ENCODE measurements at regions of chr11 and their contacts with region 1.

Region 1: DNA sequence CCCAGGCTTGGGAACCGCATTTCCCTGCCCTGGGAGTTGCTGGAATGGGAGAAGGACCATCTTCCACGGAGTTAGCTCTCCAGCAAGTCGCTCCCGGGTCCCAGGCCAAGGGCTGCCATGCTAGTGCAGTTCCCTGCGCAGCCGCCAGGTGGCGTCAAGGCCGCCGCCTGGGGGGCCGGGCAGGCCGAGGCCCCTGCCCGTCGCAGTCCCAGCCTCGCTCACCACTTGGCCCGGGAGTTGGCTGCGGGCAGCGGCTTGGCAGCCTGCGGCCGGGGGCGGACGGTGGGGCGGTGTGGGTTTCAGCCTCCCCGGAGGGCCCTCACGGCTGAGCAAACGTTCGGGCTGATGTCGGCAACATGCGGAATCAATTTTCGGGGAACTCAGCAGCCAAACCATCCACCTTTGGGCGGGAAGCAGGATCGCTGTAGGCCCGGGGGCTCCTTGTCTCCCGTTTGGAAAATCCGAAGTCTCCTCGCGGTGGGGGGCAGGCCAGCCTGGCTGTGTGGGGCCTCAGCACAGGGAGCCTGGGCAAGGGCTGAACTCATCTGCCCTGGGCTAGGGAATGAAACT is 415.1 kb downstream of the SOX6 start:
- DNase-seq: no peak
- H3K4me3 ChIP-seq: peak overlapping the region; percentile 8
- CTCF ChIP-seq: peak; percentile 95

Region 2: GRCh38 chr11:15835788-15836411 is 105.4 kb before region 1 on chr11:
- CTCF ChIA-PET with region 1: no interaction called
- POLR2A ChIA-PET with region 1: no interaction called
- DNase-seq: no peak
- H3K4me3 ChIP-seq: no peak overlapping the region
- CTCF ChIP-seq: no peak

Region 3: GRCh38 chr11:15923183-15923582 is 18.1 kb before region 1 on chr11:
- CTCF ChIA-PET with region 1: interaction called, 16 read pairs
- POLR2A ChIA-PET with region 1: no interaction called
- DNase-seq: no peak
- H3K4me3 ChIP-seq: no peak overlapping the region
- CTCF ChIP-seq: peak; percentile 25

Region 4: GRCh38 chr11:15929371-15929901 is 11.8 kb before region 1 on chr11:
- CTCF ChIA-PET with region 1: interaction called, 18 read pairs
- POLR2A ChIA-PET with region 1: no interaction called
- DNase-seq: no peak
- H3K4me3 ChIP-seq: no peak overlapping the region
- CTCF ChIP-seq: no peak

Region 5: GRCh38 chr11:15958910-15959309 is 17.6 kb after region 1 on chr11:
- CTCF ChIA-PET with region 1: interaction called, 11 read pairs
- POLR2A ChIA-PET with region 1: no interaction called
- DNase-seq: no peak
- H3K4me3 ChIP-seq: no peak overlapping the region
- CTCF ChIP-seq: no peak

Region 6: DNA sequence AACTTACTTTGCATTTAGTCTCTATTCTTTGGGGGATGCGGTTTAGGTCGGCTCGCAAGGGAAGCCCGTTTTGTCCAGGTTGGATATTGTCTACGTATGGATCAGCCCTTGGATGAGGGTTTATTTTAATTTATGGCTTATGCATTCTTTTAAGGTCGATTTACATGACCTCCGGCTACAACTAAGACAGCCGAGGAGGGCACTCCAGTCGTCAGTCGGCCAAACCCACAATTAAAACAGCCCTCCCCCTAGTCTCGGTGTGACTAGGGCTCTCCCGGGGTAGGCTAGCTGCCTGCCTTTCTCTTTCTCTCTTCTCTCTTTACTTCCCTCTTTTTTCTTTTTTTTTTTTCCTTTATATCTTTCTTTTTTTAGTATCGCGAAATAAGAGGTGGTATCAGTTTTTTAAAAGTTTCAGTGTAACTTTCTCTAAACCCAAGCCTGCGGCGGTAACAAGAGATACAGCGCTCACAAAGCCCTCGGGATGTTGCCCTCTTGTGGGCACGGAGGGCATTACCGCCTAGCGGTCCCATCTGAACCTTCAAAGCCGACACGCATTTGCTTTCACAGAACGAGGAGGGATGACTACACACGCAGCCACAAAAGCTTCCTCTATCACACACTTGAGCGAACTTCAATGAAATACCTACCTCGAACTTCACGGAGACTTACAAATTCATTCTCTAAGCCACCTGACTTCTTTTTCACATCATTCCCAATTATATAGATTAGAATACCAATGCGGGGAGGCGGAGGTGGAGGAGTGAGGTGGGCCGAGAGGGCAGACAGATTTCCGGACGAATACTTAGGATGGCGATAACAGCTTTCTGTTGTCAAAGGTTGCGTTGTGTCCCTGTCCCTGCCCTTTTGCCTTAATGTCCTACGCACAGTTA is 664.9 kb after region 1 on chr11:
- CTCF ChIA-PET with region 1: interaction called, 14 read pairs
- POLR2A ChIA-PET with region 1: no interaction called
- DNase-seq: peak; percentile 73
- H3K4me3 ChIP-seq: peak overlapping the region; percentile 79
- CTCF ChIP-seq: peak; percentile 96